Heart left ventricle (tissue), 16 donors: ENCODE measurements at regions of chr16 and their contacts with region 1.

Region 1: DNA sequence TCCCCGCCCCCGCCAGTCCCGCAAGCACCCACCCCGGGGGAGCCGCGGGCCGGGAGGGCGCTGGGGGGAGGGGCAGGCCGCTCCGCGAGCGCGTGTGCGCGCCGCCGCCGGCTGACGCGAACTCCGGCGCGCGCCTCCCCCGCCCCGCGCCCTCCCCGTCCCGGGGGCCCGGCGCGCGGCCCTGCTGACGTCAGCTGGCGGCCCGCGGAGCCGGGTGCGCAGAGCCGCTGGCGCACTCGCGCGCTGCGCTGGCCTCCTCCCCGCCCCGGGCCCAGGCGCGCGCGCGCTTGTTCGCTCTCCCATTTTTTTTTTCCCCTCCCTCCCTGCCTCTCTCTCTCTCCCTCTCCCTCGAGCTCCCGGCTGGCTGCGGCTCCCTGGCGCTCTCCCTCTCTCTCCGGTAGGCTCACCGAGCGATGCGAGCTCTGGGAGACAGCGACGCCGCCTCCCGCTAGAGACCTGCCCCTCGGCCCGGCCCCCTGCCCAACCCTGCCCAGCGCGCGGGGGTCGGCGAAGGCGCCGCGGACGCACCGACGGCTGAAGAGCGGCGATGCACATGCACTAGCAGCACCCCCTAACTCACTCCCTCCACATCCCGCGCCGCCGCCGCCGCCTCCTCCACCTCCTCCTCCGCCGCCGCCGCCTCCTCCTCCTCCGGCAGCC is at the start of gene GNAO1:
- DNase-seq: peak; percentile 79 to 86 (median 82)
- ATAC-seq: peak; percentile 48 to 92 (median 86)
- H3K4me3 ChIP-seq: peak within 1 kb of the TSS; percentile 53 to 91 (median 74)
- H3K27ac ChIP-seq: peak within 1 kb of the TSS; percentile 85 to 95 (median 91)
- H3K4me1 ChIP-seq: peaks cover 0 to 50% (median 15%) of the 10 kb centered on the region in 12 donors
- H3K27me3 ChIP-seq: peaks cover 0 to 63% (median 0%) of the 10 kb centered on the region in 9 donors
- CTCF ChIP-seq: peak in 1 of 12 donors; percentile 16
- POLR2A ChIP-seq: peak in 1 of 2 donors; percentile 19
- total RNA-seq, gene GNAO1: 8.1 to 26.8 (median 13.4) TPM

Region 2: GRCh38 chr16:55944377-55944802 is 246.9 kb before region 1 on chr16:
- intact Hi-C with region 1: loop called in 5 of 10 experiments (anchors 10 kb)
- DNase-seq: peak; percentile 59 to 77 (median 71)
- ATAC-seq: peak; percentile 80 to 95 (median 89)
- H3K4me3 ChIP-seq: no peak overlapping the region
- H3K27ac ChIP-seq: peak overlapping the region in 1 of 12 donors; percentile 14
- H3K4me1 ChIP-seq: peaks cover 0 to 6% (median 0%) of the 10 kb centered on the region in 12 donors
- H3K27me3 ChIP-seq: peaks cover 0 to 5% (median 0%) of the 10 kb centered on the region in 9 donors
- CTCF ChIP-seq: peak; percentile 85 to 96 (median 92)
- POLR2A ChIP-seq: no peak

Region 3: GRCh38 chr16:56048425-56049105 is 142.7 kb before region 1 on chr16:
- intact Hi-C with region 1: loop called in 6 of 10 experiments (anchors 2 to 10 kb)
- DNase-seq: no peak
- ATAC-seq: no peak
- H3K4me3 ChIP-seq: no peak overlapping the region
- H3K27ac ChIP-seq: peak overlapping the region in 2 of 12 donors; percentile 47 to 50
- H3K4me1 ChIP-seq: peaks cover 0 to 19% (median 3%) of the 10 kb centered on the region in 12 donors
- H3K27me3 ChIP-seq: no peaks in the 10 kb centered on the region
- CTCF ChIP-seq: no peak
- POLR2A ChIP-seq: no peak

Region 4: DNA sequence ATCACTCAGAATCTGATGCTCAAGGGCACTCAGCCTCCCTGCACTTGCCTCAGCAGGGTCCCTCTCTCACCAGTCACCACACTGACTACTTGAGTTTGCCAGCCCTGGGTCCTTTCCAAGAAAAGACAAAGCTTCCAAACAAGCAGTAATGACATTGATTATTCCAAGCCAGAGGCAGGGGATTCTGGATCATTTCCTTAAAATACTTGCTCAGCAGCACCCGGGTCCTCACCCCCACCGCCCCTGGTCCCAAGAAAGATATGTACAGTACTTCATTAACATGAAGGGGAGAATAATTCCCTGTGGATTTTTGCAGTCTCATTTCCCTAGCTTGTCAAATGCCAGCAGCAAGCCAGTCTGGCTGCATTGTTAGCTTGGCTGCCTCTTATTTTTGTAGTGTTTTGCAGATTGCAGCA is 83.2 kb before region 1 on chr16:
- intact Hi-C with region 1: loop called in 3 of 10 experiments (anchors 5 kb)
- DNase-seq: peak in 2 of 5 donors; percentile 20 to 46
- ATAC-seq: peak; percentile 50 to 66 (median 58)
- H3K4me3 ChIP-seq: no peak overlapping the region
- H3K27ac ChIP-seq: peak overlapping the region in 7 of 12 donors; percentile 15 to 54 (median 38)
- H3K4me1 ChIP-seq: peaks cover 0 to 18% (median 0%) of the 10 kb centered on the region in 12 donors
- H3K27me3 ChIP-seq: no peaks in the 10 kb centered on the region
- CTCF ChIP-seq: no peak
- POLR2A ChIP-seq: no peak

Region 5: DNA sequence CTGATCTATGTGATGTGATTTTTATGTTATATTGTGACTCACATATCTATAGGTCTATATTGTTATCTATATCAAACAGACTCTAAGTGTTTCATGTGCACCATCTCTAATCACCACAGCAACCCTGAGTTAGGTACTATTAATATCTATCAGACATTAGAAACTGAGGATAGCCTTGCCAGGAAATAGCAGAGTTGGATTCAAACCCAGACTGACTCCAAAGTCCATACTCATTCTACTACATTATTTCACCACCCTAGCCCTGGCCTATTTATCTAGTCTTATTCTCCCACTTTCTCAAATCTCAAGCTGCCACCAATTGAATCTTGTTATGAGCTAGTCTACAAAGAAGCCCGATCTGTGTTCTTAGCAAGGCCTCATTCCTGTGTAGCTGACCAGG is 65.4 kb before region 1 on chr16:
- intact Hi-C with region 1: no loop called
- DNase-seq: no peak
- ATAC-seq: peak in 2 of 4 donors; percentile 39 to 46
- H3K4me3 ChIP-seq: no peak overlapping the region
- H3K27ac ChIP-seq: no peak overlapping the region
- H3K4me1 ChIP-seq: peaks cover 0 to 4% (median 0%) of the 10 kb centered on the region in 12 donors
- H3K27me3 ChIP-seq: peaks cover 0 to 2% (median 0%) of the 10 kb centered on the region in 9 donors
- CTCF ChIP-seq: no peak
- POLR2A ChIP-seq: no peak

Region 6: GRCh38 chr16:56298948-56299596 is 107.8 kb after region 1 on chr16:
- intact Hi-C with region 1: loop called in 1 of 10 experiments (anchors 5 kb)
- DNase-seq: peak in 2 of 5 donors; percentile 33 to 53
- ATAC-seq: peak in 3 of 4 donors; percentile 33 to 73 (median 37)
- H3K4me3 ChIP-seq: no peak overlapping the region
- H3K27ac ChIP-seq: peak overlapping the region in 9 of 12 donors; percentile 21 to 75 (median 41)
- H3K4me1 ChIP-seq: peaks cover 0 to 46% (median 26%) of the 10 kb centered on the region in 12 donors
- H3K27me3 ChIP-seq: no peaks in the 10 kb centered on the region
- CTCF ChIP-seq: no peak
- POLR2A ChIP-seq: no peak